ENCODE measurements at regions of chr4 and their contacts with region 1.

Region 1: DNA sequence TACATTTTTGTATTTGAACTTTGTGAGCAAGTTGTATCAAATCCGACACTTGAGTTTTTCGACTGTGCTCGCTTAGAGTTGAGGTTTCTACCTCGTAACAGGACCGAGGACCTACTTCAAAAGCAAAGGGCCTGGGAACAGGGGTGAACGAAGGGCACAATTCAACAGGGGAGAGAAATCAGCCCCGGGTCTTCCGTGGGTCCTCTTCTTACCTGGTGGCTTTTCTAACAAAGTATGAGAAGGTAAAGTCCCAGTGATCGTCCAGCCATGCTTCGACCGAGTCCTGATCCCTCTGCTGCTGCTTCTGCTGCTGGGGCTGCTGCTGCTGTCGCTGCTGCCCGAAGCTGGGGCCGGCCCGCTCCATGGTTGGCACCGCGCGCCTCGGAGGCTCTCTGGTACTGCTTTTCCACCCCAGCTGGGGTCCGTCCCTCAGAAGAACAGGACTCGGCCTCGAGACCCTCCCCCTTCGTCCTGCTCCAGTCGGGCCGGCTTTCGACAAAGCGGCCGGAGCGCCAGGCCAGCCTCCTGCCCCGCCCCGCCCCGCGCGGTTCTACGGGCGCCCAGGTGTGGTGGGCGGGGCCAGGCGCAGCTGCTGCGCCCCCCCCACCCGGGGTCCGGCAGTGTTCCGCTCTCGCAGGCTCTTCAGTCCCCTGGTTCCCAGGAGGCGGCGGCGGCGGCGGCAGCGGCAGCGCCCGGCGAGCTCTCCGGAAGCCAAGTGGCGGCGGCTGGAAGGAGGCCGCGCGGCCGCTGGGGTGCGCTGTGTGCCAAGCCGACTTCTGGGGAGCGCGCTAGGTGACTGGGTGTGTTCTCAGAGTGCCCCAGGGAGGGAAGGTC is at the start of gene PDE5A:
- DNase-seq: peak; percentile 46
- ATAC-seq: peak; percentile 92
- H3K4me3 ChIP-seq: peak within 1 kb of the TSS; percentile 67 to 74 (median 73)
- H3K27ac ChIP-seq: no peak within 1 kb of the TSS
- H3K4me1 ChIP-seq: peaks cover 28% of the 10 kb centered on the region
- H3K27me3 ChIP-seq: peaks cover 4 to 21% of the 10 kb centered on the region in 2 experiments; a peak in 4 of 5 replicates
- CTCF ChIP-seq: peak; percentile 86
- EP300 ChIP-seq: no peak
- POLR2A ChIP-seq: no peak
- RAD21 ChIP-seq: peak; percentile 88
- total RNA-seq, gene PDE5A: 0.44 and 0.53 TPM in 2 replicates

Region 2: DNA sequence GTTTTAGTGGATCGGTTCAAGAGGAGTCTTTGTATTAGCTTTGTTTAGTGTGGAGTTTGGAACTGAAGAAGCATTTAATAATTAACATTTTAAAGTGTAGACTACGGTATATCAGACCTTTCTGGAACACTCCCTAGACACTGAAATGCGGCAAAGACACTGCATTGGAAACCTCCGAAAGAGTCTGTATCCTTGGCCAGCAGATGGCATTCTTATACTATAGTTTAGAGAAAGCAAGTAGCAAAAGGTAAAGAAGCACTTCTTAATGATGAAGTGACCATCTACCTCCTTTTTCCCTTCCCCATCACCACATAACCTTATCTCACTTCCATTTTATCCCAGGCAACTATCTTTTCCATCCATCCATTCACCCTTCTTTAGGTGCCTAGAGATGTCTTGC is 314.2 kb before region 1 on chr4:
- CTCF ChIA-PET with region 1: interaction called, 3 read pairs
- POLR2A ChIA-PET with region 1: no interaction called
- in situ Hi-C with region 1: loop called (anchors 10 kb)
- intact Hi-C with region 1: loop called (anchors 1 kb)
- DNase-seq: peak; percentile 41
- ATAC-seq: peak; percentile 75
- H3K4me3 ChIP-seq: no peak overlapping the region
- H3K27ac ChIP-seq: no peak overlapping the region
- H3K4me1 ChIP-seq: no peaks in the 10 kb centered on the region
- H3K27me3 ChIP-seq: no peaks in the 10 kb centered on the region
- CTCF ChIP-seq: peak; percentile 61
- EP300 ChIP-seq: no peak
- POLR2A ChIP-seq: no peak
- RAD21 ChIP-seq: peak; percentile 38; the same call in 1 of the 2 replicates

Region 3: GRCh38 chr4:119490335-119490734 is 138.2 kb before region 1 on chr4:
- CTCF ChIA-PET with region 1: no interaction called
- POLR2A ChIA-PET with region 1: no interaction called
- in situ Hi-C with region 1: no loop called
- intact Hi-C with region 1: loop called (anchors 10 kb)
- DNase-seq: no peak
- ATAC-seq: peak; percentile 84
- H3K4me3 ChIP-seq: no peak overlapping the region
- H3K27ac ChIP-seq: no peak overlapping the region
- H3K4me1 ChIP-seq: no peaks in the 10 kb centered on the region
- H3K27me3 ChIP-seq: no peaks in the 10 kb centered on the region
- CTCF ChIP-seq: peak; percentile 33; the same call in 1 of the 2 replicates
- EP300 ChIP-seq: no peak
- POLR2A ChIP-seq: no peak
- RAD21 ChIP-seq: no peak

Region 4: GRCh38 chr4:119559044-119559647 is 69.4 kb before region 1 on chr4:
- CTCF ChIA-PET with region 1: no interaction called
- POLR2A ChIA-PET with region 1: no interaction called
- in situ Hi-C with region 1: no loop called
- intact Hi-C with region 1: loop called (anchors 1 kb)
- DNase-seq: peak; percentile 39
- ATAC-seq: no peak; the same call in 2 of the 3 replicates
- H3K4me3 ChIP-seq: no peak overlapping the region
- H3K27ac ChIP-seq: no peak overlapping the region
- H3K4me1 ChIP-seq: no peaks in the 10 kb centered on the region
- H3K27me3 ChIP-seq: no peaks in the 10 kb centered on the region
- CTCF ChIP-seq: peak; percentile 33; the same call in 1 of the 2 replicates
- EP300 ChIP-seq: no peak
- POLR2A ChIP-seq: no peak
- RAD21 ChIP-seq: no peak

Region 5: GRCh38 chr4:119697887-119698393 is 69.4 kb after region 1 on chr4:
- CTCF ChIA-PET with region 1: no interaction called
- POLR2A ChIA-PET with region 1: no interaction called
- in situ Hi-C with region 1: no loop called
- intact Hi-C with region 1: loop called (anchors 2 kb)
- DNase-seq: peak; percentile 34
- ATAC-seq: peak; percentile 83
- H3K4me3 ChIP-seq: no peak overlapping the region
- H3K27ac ChIP-seq: no peak overlapping the region
- H3K4me1 ChIP-seq: peaks cover 9% of the 10 kb centered on the region
- H3K27me3 ChIP-seq: no peaks in the 10 kb centered on the region
- CTCF ChIP-seq: no peak
- EP300 ChIP-seq: peak in 1 of 2 experiments; percentile 32; a peak in 2 of 4 replicates
- POLR2A ChIP-seq: no peak
- RAD21 ChIP-seq: no peak

Region 6: DNA sequence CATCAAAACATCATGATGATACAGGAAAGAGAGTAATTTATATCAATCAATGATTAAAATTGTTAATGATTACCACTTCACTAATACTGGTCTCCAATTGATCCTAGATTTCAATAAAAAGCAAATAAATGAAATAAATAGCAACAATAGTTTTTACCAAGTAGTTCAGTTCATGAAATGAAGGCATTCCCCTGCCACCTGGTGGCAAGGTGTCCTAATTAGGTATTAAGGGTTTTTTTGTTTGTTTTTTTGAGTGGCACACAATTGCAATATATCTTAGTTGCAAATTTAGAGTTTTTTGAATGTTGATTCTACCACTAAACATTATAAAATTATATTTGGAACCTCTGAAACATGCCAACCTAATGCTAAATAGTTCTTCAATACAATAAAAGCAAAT is 157.4 kb after region 1 on chr4:
- CTCF ChIA-PET with region 1: interaction called, 3 read pairs
- POLR2A ChIA-PET with region 1: no interaction called
- in situ Hi-C with region 1: loop called (anchors 10 kb)
- intact Hi-C with region 1: loop called (anchors 1 kb)
- DNase-seq: peak; percentile 3
- ATAC-seq: no peak
- H3K4me3 ChIP-seq: no peak overlapping the region
- H3K27ac ChIP-seq: no peak overlapping the region
- H3K4me1 ChIP-seq: no peaks in the 10 kb centered on the region
- H3K27me3 ChIP-seq: no peaks in the 10 kb centered on the region
- CTCF ChIP-seq: peak; percentile 38; the same call in 1 of the 2 replicates
- EP300 ChIP-seq: no peak
- POLR2A ChIP-seq: no peak
- RAD21 ChIP-seq: no peak

Region 7: GRCh38 chr4:120049732-120050494 is 421.4 kb after region 1 on chr4:
- CTCF ChIA-PET with region 1: interaction called, 10 read pairs
- POLR2A ChIA-PET with region 1: no interaction called
- in situ Hi-C with region 1: loop called (anchors 10 kb)
- intact Hi-C with region 1: loop called (anchors 1 kb)
- DNase-seq: peak; percentile 62
- ATAC-seq: peak; percentile 99
- H3K4me3 ChIP-seq: no peak overlapping the region
- H3K27ac ChIP-seq: no peak overlapping the region
- H3K4me1 ChIP-seq: no peaks in the 10 kb centered on the region
- H3K27me3 ChIP-seq: no peaks in the 10 kb centered on the region
- CTCF ChIP-seq: peak; percentile 91
- EP300 ChIP-seq: no peak
- POLR2A ChIP-seq: no peak
- RAD21 ChIP-seq: peak; percentile 67